ENCODE measurements at regions of chr6 and their contacts with region 1.

Region 1: GRCh38 chr6:131627724-131628682 is at the start of gene MED23:
- DNase-seq: peak; percentile 89 to 98 (median 95)
- ATAC-seq: peak; percentile 93
- H3K4me3 ChIP-seq: peak within 1 kb of the TSS; percentile 86
- H3K4me3 Mint-ChIP-seq: peak within 1 kb of the TSS; percentile 98
- H3K27ac ChIP-seq: peak within 1 kb of the TSS; percentile 67 to 76
- H3K27ac Mint-ChIP-seq: peak within 1 kb of the TSS; percentile 86
- H3K4me1 ChIP-seq: peaks cover 8% of the 10 kb centered on the region
- H3K4me1 Mint-ChIP-seq: peaks cover 43% of the 10 kb centered on the region
- H3K27me3 ChIP-seq: no peaks in the 10 kb centered on the region
- H3K27me3 Mint-ChIP-seq: no peaks in the 10 kb centered on the region
- CTCF ChIP-seq: peak; percentile 99
- total RNA-seq, gene MED23: 56.7 to 59.5 TPM

Region 2: GRCh38 chr6:131063028-131063763 is 564.8 kb before region 1 on chr6 and contains the start of gene EPB41L2:
- CTCF ChIA-PET with region 1: no interaction called
- POLR2A ChIA-PET with region 1: no interaction called
- intact Hi-C with region 1: loop called in 1 of 2 experiments (anchors 5 kb)
- DNase-seq: peak; percentile 51 to 92 (median 72)
- ATAC-seq: peak; percentile 88
- H3K4me3 ChIP-seq: peak within 1 kb of the TSS; percentile 86
- H3K4me3 Mint-ChIP-seq: peak within 1 kb of the TSS; percentile 91
- H3K27ac ChIP-seq: no peak within 1 kb of the TSS
- H3K27ac Mint-ChIP-seq: peak within 1 kb of the TSS; percentile 45
- H3K4me1 ChIP-seq: peaks cover 18% of the 10 kb centered on the region
- H3K4me1 Mint-ChIP-seq: peaks cover 26% of the 10 kb centered on the region
- H3K27me3 ChIP-seq: no peaks in the 10 kb centered on the region
- H3K27me3 Mint-ChIP-seq: no peaks in the 10 kb centered on the region
- CTCF ChIP-seq: no peak
- total RNA-seq, gene EPB41L2: 9.5 to 12.3 TPM

Region 3: GRCh38 chr6:131182991-131183425 is 445.0 kb before region 1 on chr6:
- CTCF ChIA-PET with region 1: interaction called, 5 read pairs
- POLR2A ChIA-PET with region 1: interaction called, 5 read pairs
- intact Hi-C with region 1: loop called (anchors 1 to 5 kb)
- DNase-seq: peak in 6 of 14 experiments; percentile 0 to 71 (median 57)
- ATAC-seq: peak; percentile 91
- H3K4me3 ChIP-seq: no peak overlapping the region
- H3K4me3 Mint-ChIP-seq: peak overlapping the region; percentile 81
- H3K27ac ChIP-seq: no peak overlapping the region
- H3K27ac Mint-ChIP-seq: peak overlapping the region; percentile 87
- H3K4me1 ChIP-seq: peaks cover 12% of the 10 kb centered on the region
- H3K4me1 Mint-ChIP-seq: peaks cover 20% of the 10 kb centered on the region
- H3K27me3 ChIP-seq: no peaks in the 10 kb centered on the region
- H3K27me3 Mint-ChIP-seq: no peaks in the 10 kb centered on the region
- CTCF ChIP-seq: peak; percentile 81

Region 4: GRCh38 chr6:131199568-131200272 is 428.3 kb before region 1 on chr6:
- CTCF ChIA-PET with region 1: interaction called, 14 read pairs
- POLR2A ChIA-PET with region 1: interaction called, 10 read pairs
- intact Hi-C with region 1: no loop called
- DNase-seq: peak; percentile 58 to 95 (median 68)
- ATAC-seq: peak; percentile 92
- H3K4me3 ChIP-seq: peak overlapping the region; percentile 43
- H3K4me3 Mint-ChIP-seq: peak overlapping the region; percentile 84
- H3K27ac ChIP-seq: peak overlapping the region; percentile 72 to 80
- H3K27ac Mint-ChIP-seq: peak overlapping the region; percentile 98
- H3K4me1 ChIP-seq: peaks cover 40% of the 10 kb centered on the region
- H3K4me1 Mint-ChIP-seq: peaks cover 68% of the 10 kb centered on the region
- H3K27me3 ChIP-seq: no peaks in the 10 kb centered on the region
- H3K27me3 Mint-ChIP-seq: no peaks in the 10 kb centered on the region
- CTCF ChIP-seq: peak; percentile 76

Region 5: DNA sequence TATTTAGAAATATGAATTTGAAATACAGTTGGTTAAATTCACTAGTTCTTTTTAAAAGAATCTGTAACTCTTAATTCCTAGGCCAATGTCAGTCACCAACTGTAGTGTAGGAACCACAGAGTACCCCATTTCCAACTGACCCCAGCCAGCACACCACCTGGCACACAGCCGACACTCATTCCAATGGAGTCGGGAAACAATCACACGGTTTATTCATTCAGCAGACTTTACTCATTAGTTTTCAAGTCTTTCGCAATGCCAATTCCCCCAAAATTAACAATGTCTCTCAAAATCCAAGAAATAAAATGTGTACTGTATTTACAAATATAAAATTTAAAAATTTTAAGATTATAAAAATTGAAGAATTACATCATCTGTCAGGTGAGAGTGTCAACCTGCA is 41.5 kb before region 1 on chr6:
- CTCF ChIA-PET with region 1: interaction called, 5 read pairs
- POLR2A ChIA-PET with region 1: interaction called, 4 read pairs
- intact Hi-C with region 1: loop called in 1 of 2 experiments (anchors 5 kb)
- DNase-seq: no peak
- ATAC-seq: no peak
- H3K4me3 ChIP-seq: no peak overlapping the region
- H3K4me3 Mint-ChIP-seq: no peak overlapping the region
- H3K27ac ChIP-seq: no peak overlapping the region
- H3K27ac Mint-ChIP-seq: no peak overlapping the region
- H3K4me1 ChIP-seq: no peaks in the 10 kb centered on the region
- H3K4me1 Mint-ChIP-seq: no peaks in the 10 kb centered on the region
- H3K27me3 ChIP-seq: no peaks in the 10 kb centered on the region
- H3K27me3 Mint-ChIP-seq: no peaks in the 10 kb centered on the region
- CTCF ChIP-seq: no peak

Region 6: GRCh38 chr6:131602781-131603312 is 25.2 kb before region 1 on chr6:
- CTCF ChIA-PET with region 1: interaction called, 11 read pairs
- POLR2A ChIA-PET with region 1: interaction called, 5 read pairs
- intact Hi-C with region 1: no loop called
- DNase-seq: no peak
- ATAC-seq: no peak
- H3K4me3 ChIP-seq: no peak overlapping the region
- H3K4me3 Mint-ChIP-seq: no peak overlapping the region
- H3K27ac ChIP-seq: no peak overlapping the region
- H3K27ac Mint-ChIP-seq: no peak overlapping the region
- H3K4me1 ChIP-seq: no peaks in the 10 kb centered on the region
- H3K4me1 Mint-ChIP-seq: no peaks in the 10 kb centered on the region
- H3K27me3 ChIP-seq: no peaks in the 10 kb centered on the region
- H3K27me3 Mint-ChIP-seq: no peaks in the 10 kb centered on the region
- CTCF ChIP-seq: no peak

Region 7: DNA sequence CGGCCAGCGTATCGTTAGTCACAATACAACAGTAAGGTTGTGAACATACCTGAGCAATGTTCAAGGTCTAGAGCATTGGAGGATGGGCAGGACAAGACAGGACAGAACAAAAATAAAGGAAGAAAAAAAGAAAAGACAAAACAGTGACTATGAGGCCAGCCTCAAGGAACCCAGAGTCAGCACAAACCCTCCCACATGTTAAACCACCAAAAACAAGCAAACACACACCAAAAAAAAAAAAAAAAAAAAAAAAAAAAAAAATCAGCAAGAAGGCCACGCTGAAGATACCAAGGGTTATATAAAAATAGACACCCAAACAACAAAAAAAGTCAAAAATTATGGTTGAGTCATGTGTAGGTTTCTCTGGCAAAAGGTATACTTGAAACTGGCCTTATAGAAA is 12.7 kb before region 1 on chr6:
- CTCF ChIA-PET with region 1: interaction called, 13 read pairs
- POLR2A ChIA-PET with region 1: interaction called, 9 read pairs
- intact Hi-C with region 1: no loop called
- DNase-seq: no peak
- ATAC-seq: no peak
- H3K4me3 ChIP-seq: no peak overlapping the region
- H3K4me3 Mint-ChIP-seq: no peak overlapping the region
- H3K27ac ChIP-seq: no peak overlapping the region
- H3K27ac Mint-ChIP-seq: no peak overlapping the region
- H3K4me1 ChIP-seq: no peaks in the 10 kb centered on the region
- H3K4me1 Mint-ChIP-seq: peaks cover 5% of the 10 kb centered on the region
- H3K27me3 ChIP-seq: no peaks in the 10 kb centered on the region
- H3K27me3 Mint-ChIP-seq: no peaks in the 10 kb centered on the region
- CTCF ChIP-seq: no peak